Left cardiac atrium (tissue), 4 donors: ENCODE measurements at regions of chr14 and their contacts with region 1.

Region 1: GRCh38 chr14:99793213-99794150 is at the start of gene EML1:
- DNase-seq: peak; percentile 91
- ATAC-seq: peak; percentile 91 to 93
- total RNA-seq, gene EML1: 23.7 to 24.6 TPM

Region 2: DNA sequence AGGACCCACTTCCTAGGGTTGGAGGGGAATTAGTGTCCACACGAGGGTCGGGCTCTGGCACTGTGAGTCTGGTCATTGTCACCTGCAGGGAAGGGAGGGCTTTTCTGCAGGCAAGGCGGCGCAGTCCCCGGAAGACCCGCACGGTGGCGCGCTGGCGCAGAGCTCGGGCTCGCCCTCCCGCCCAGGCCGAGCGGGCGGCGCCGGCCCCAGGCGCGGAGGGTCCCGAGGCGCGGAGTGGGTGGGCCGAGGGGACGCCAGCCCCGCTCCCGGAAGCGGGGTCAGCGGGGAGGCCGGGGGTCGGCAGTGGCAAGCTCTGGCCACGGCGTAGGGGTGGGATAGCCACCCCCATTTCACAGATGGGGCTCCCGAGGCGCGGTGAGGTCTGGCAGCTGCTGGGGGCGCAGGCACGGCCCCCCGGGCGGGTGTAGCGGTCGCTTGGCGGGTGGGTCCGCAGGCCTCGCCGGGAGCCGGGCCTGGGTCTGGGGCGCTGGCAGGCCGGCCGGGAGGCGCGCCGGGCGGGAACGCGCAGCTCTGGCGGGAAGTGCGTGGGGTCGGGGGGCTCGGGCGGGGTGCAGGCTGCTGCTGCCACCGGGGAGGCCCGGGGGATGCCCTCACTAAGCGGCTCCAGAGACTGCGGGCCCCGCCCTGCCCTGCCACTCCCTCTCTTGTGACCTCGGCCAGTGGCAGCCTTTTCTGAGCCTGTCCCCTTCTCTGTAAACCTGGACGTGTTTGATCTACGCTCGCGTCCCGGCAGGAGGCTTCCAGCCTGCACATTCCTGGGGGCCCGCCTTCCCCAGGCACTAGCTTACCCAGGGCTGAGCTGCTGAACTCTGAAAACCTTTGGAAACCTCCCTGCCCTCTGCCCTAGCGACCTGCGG is 63.3 kb before region 1 on chr14:
- intact Hi-C with region 1: loop called (anchors 5 kb)
- DNase-seq: peak; percentile 74
- ATAC-seq: peak; percentile 64 to 80

Region 3: GRCh38 chr14:99755629-99756603 is 37.6 kb before region 1 on chr14:
- intact Hi-C with region 1: loop called in 1 of 2 experiments (anchors 5 kb)
- DNase-seq: peak; percentile 91
- ATAC-seq: peak; percentile 88 to 90